Testis (tissue), 5 donors: ENCODE measurements at regions of chr6 and their contacts with region 1.

Region 1: DNA sequence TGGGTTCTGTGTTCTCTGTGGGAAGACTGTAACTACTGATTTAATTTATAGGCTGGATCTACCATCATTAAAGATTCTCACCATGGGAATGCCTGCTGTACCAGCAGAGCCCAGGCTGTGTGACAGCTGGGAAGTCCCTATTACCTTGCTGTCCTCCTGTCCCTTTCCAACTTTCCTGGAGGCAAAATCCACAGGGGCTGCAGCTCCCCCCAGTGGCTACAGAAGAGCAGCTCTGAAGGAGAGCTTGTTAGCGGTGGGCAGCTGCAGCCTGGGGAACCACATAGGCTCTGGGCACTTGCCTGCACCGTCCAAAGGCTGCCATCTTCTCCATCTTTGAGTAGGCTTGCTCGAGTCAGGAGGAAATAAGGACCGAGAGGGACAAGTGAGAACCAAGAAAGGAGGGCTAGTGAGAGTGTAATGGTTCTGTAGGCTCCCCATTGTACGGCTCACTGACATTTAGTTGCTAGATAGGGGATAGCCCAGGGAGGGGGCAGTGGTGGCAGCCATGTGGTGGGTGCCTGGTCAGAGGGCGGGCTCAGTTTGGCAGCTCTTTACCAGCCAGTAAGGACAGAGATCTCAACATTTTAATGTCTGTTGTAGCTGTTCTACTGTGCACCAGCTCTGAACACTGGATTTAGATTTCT is 155.1 kb upstream of the MLIP start:
- DNase-seq: peak; percentile 82
- H3K4me3 ChIP-seq: no peak overlapping the region
- H3K27ac ChIP-seq: no peak overlapping the region
- H3K4me1 ChIP-seq: no peaks in the 10 kb centered on the region
- H3K27me3 ChIP-seq: no peaks in the 10 kb centered on the region
- CTCF ChIP-seq: peak; percentile 20 to 77 (median 56)
- POLR2A ChIP-seq: no peak

Region 2: DNA sequence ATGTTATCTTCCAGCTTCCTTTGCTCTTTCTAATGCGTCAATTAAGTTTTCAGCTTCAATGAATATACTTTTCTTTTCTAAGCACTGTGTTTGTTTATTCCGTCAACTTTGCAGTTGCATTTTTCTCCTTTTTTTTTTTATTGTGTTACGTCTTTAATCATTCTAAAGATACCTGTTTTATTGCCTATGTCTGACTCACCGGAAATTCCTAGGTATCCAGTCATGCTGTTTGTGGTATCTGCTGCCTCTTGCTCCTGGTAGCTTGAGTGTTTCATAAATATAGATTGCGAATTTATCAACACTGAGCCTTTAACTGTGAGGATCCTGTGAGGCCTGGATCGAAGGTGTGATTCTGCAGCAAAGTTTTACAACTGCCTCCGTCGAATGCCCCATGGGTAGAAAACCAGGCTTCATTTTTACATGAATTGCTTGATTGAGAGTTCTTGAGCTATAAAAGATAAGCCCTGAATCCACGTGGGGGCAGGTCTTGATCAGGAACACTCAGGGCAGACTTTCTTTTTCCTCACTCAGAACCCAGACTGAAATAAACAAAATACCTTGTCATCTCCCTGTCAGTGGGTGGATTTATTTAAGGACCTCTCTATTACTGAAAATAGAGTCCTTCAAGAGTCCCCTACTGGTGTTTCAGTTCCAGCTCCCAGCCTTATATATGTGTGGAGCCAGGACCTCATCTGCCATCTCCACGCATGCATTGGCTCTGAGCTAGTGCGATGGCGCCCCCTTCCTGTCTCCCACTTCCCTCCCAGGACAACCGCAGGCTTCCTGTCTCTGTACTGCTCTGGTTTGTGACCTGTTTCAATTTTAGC is 221.5 kb before region 1 on chr6:
- intact Hi-C with region 1: loop called (anchors 10 kb)
- DNase-seq: peak; percentile 69
- H3K4me3 ChIP-seq: no peak overlapping the region
- H3K27ac ChIP-seq: no peak overlapping the region
- H3K4me1 ChIP-seq: peaks cover 5% of the 10 kb centered on the region
- H3K27me3 ChIP-seq: no peaks in the 10 kb centered on the region
- CTCF ChIP-seq: peak in 1 of 3 experiments; percentile 13
- POLR2A ChIP-seq: no peak

Region 3: DNA sequence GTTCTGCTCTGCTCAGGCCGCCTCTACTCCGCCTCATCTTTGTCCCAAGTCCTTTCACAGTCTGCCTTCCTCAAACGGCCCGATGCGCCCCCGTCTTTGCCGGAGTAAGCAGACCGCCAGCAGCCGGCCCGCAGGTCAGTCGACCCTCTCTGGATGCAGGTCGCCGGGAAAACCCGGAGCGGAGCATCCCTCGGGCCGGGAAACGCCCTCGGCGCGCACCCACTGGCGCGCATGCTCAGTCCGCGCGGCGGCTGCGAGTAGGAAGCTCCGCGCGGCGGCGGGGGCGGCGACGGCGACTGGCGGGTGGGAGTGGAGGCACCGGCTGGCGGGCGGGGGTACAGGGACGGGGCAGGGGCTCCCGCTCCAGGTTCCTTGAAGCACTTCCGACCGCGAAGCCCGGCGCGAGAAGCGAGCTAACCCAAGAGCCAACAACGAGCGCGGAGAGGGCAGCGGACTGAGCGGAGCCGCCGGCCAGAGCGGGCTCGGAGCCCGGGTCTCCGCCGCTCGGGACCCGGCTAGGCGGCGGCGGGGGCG is 161.4 kb before region 1 on chr6 and contains the start of gene LRRC1:
- intact Hi-C with region 1: loop called (anchors 10 kb)
- DNase-seq: peak; percentile 94
- H3K4me3 ChIP-seq: peak within 1 kb of the TSS; percentile 82 to 93
- H3K27ac ChIP-seq: peak within 1 kb of the TSS; percentile 79 to 81
- H3K4me1 ChIP-seq: peaks cover 11% of the 10 kb centered on the region
- H3K27me3 ChIP-seq: no peaks in the 10 kb centered on the region
- CTCF ChIP-seq: no peak
- POLR2A ChIP-seq: no peak
- total RNA-seq, gene LRRC1: 34.1 to 36.5 TPM

Region 4: DNA sequence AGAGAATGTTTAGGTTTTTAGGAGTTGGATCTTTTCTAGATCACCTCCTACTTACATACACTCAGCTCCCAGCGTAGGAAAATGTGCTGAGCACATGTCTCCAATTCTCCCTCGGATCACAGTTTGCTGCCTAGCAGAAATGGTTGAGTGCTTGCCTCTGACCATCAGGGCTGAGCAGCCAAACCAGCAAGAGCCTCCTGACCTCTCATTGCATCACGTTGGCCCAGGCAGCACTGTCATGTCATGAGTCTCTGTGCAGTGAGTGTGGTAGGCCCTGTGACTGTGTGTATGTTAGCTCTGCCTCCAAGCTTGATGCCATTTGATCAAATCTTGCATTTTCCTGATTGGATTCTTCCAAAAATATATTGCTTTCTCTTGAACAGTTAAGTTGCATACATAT is 49.3 kb before region 1 on chr6:
- intact Hi-C with region 1: no loop called
- DNase-seq: peak; percentile 26
- H3K4me3 ChIP-seq: no peak overlapping the region
- H3K27ac ChIP-seq: no peak overlapping the region
- H3K4me1 ChIP-seq: no peaks in the 10 kb centered on the region
- H3K27me3 ChIP-seq: no peaks in the 10 kb centered on the region
- CTCF ChIP-seq: no peak
- POLR2A ChIP-seq: no peak

Region 5: GRCh38 chr6:54070025-54070424 is 113.8 kb after region 1 on chr6:
- intact Hi-C with region 1: no loop called
- DNase-seq: no peak
- H3K4me3 ChIP-seq: no peak overlapping the region
- H3K27ac ChIP-seq: no peak overlapping the region
- H3K4me1 ChIP-seq: no peaks in the 10 kb centered on the region
- H3K27me3 ChIP-seq: no peaks in the 10 kb centered on the region
- CTCF ChIP-seq: no peak
- POLR2A ChIP-seq: no peak